CD4-positive, alpha-beta memory T cell (primary cell): ENCODE measurements at regions of chr13 and their contacts with region 1.

Region 1: DNA sequence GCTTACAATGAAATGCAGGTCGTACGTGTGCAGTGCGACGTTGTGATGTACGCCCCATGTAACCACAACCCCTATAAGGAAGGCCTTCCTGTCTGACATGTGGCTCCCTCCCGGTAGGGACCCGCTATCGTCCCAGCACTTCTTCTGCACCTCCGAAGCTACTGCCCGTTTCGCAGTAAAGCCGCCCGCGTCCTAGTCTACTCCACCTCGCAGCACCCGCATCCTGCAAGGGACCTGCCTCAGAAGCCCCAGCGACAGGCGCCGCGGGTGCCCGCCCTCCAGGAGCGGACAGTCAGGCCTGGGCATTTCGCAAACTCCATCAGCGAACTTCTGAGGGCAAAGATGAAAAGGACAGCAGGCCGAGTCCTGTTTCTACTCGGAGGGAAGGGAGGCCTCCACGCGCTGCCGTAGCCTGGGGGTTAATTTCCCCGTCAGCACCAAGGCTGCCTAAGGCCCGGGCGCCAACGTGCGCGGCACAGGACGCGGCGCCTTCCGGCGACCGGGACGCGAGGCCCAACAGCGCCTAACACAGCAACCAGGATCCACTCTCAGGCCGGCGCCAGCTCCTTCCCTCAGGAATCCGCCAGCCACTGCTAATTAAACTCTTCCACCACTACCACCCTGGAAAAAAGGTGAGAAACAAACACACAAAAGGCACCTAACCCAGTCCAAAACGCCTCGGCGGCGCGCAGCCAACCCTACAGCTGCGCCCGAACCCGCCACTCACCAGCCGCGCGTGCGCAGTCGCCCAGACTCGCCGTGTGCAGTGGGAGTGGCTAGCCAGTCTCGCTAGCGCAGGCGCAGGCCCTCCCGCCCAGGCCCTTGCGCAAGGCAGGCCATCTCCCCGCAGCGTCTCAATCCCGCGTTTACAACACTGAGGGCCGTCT is at the start of gene EEF1AKMT1:
- DNase-seq: peak; percentile 89 to 93 (median 93)
- H3K4me3 ChIP-seq: peak within 1 kb of the TSS; percentile 70 to 86
- H3K4me3 Mint-ChIP-seq: peak within 1 kb of the TSS; percentile 90 to 99 (median 94)
- H3K27ac ChIP-seq: peak within 1 kb of the TSS; percentile 85
- H3K27ac Mint-ChIP-seq: peak within 1 kb of the TSS; percentile 95 to 100 (median 99)
- H3K4me1 ChIP-seq: peaks cover 13% of the 10 kb centered on the region
- H3K4me1 Mint-ChIP-seq: peaks cover 17 to 35% (median 26%) of the 10 kb centered on the region in 4 donors
- H3K27me3 ChIP-seq: no peaks in the 10 kb centered on the region
- H3K27me3 Mint-ChIP-seq: no peaks in the 10 kb centered on the region
- total RNA-seq, gene EEF1AKMT1: 8.1 TPM

Region 2: GRCh38 chr13:19863323-19864023 is 910.0 kb before region 1 on chr13 and contains the start of gene ZMYM5:
- CTCF ChIA-PET with region 1: no interaction called
- POLR2A ChIA-PET with region 1: interaction called, 3 read pairs
- intact Hi-C with region 1: loop called (anchors 5 kb)
- DNase-seq: peak; percentile 90 to 95 (median 92)
- H3K4me3 ChIP-seq: peak within 1 kb of the TSS; percentile 61 to 96
- H3K4me3 Mint-ChIP-seq: peak within 1 kb of the TSS; percentile 96 to 99 (median 98)
- H3K27ac ChIP-seq: peak within 1 kb of the TSS; percentile 81
- H3K27ac Mint-ChIP-seq: peak within 1 kb of the TSS; percentile 90 to 98 (median 96)
- H3K4me1 ChIP-seq: peaks cover 33% of the 10 kb centered on the region
- H3K4me1 Mint-ChIP-seq: peaks cover 23 to 47% (median 35%) of the 10 kb centered on the region in 4 donors
- H3K27me3 ChIP-seq: no peaks in the 10 kb centered on the region
- H3K27me3 Mint-ChIP-seq: no peaks in the 10 kb centered on the region
- total RNA-seq, gene ZMYM5: 25.1 to 25.5 TPM

Region 3: GRCh38 chr13:20495082-20496023 is 278.1 kb before region 1 on chr13:
- CTCF ChIA-PET with region 1: no interaction called
- POLR2A ChIA-PET with region 1: no interaction called
- intact Hi-C with region 1: loop called (anchors 5 kb)
- DNase-seq: peak; percentile 62 to 70 (median 68)
- H3K4me3 ChIP-seq: no peak overlapping the region
- H3K4me3 Mint-ChIP-seq: no peak overlapping the region
- H3K27ac ChIP-seq: no peak overlapping the region
- H3K27ac Mint-ChIP-seq: peak overlapping the region in 1 of 7 donors; percentile 32
- H3K4me1 ChIP-seq: peaks cover 6% of the 10 kb centered on the region
- H3K4me1 Mint-ChIP-seq: peaks cover 0 to 7% (median 2%) of the 10 kb centered on the region in 4 donors
- H3K27me3 ChIP-seq: no peaks in the 10 kb centered on the region
- H3K27me3 Mint-ChIP-seq: no peaks in the 10 kb centered on the region

Region 4: GRCh38 chr13:20566898-20567874 is 206.3 kb before region 1 on chr13 and contains the start of gene IFT88:
- CTCF ChIA-PET with region 1: no interaction called
- POLR2A ChIA-PET with region 1: interaction called, 4 read pairs
- intact Hi-C with region 1: loop called (anchors 1 kb)
- DNase-seq: peak; percentile 78 to 86 (median 80)
- H3K4me3 ChIP-seq: peak within 1 kb of the TSS; percentile 56 to 61
- H3K4me3 Mint-ChIP-seq: peak within 1 kb of the TSS; percentile 92 to 95 (median 94)
- H3K27ac ChIP-seq: peak within 1 kb of the TSS; percentile 53
- H3K27ac Mint-ChIP-seq: peak within 1 kb of the TSS; percentile 92 to 96 (median 92)
- H3K4me1 ChIP-seq: peaks cover 16% of the 10 kb centered on the region
- H3K4me1 Mint-ChIP-seq: peaks cover 10 to 19% (median 14%) of the 10 kb centered on the region in 4 donors
- H3K27me3 ChIP-seq: no peaks in the 10 kb centered on the region
- H3K27me3 Mint-ChIP-seq: no peaks in the 10 kb centered on the region
- total RNA-seq, gene IFT88: 8.3 to 9.8 TPM

Region 5: DNA sequence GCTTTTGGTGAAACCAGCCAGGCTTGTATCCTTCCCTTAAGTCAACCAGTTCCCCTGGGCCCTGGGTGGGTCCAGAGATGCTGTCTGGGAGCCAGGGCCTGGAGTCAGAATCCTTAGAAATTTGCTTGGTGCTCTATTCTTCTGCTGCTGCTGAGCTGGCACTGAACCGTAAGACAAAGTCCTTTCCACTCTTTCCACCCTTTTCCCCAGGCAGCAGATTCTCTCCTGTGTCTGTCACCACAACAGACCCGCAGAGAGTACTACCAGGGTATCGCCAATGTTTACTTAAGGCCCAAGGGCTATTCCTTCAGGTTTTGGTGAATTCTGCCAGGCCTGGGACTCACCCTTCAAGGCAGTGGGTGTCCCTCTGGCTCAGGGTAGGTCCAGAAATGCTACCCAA is 194.2 kb before region 1 on chr13:
- CTCF ChIA-PET with region 1: no interaction called
- POLR2A ChIA-PET with region 1: no interaction called
- intact Hi-C with region 1: no loop called
- DNase-seq: no peak
- H3K4me3 ChIP-seq: no peak overlapping the region
- H3K4me3 Mint-ChIP-seq: no peak overlapping the region
- H3K27ac ChIP-seq: no peak overlapping the region
- H3K27ac Mint-ChIP-seq: no peak overlapping the region
- H3K4me1 ChIP-seq: no peaks in the 10 kb centered on the region
- H3K4me1 Mint-ChIP-seq: peaks cover 0 to 2% (median 0%) of the 10 kb centered on the region in 4 donors
- H3K27me3 ChIP-seq: no peaks in the 10 kb centered on the region
- H3K27me3 Mint-ChIP-seq: no peaks in the 10 kb centered on the region

Region 6: DNA sequence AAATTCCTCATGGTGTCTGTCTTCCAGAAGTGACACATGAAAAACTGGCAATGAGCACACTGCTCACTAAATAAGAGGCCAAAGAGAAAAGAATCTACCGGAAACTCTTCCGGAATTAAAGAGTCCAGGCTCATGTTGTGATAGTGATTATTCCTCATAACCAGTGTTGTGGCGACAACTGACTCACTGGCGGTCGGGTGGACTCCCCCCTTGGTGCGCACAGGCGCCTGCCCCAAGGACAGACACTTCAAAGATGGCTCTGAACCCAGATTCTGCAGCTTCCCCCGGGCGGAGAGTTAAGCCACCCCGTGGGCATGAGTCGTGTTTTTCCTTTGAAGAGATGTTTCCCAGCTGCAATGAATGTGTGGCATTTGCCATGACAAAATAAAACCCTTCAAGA is 59.7 kb before region 1 on chr13:
- CTCF ChIA-PET with region 1: no interaction called
- POLR2A ChIA-PET with region 1: no interaction called
- intact Hi-C with region 1: loop called (anchors 2 kb)
- DNase-seq: no peak
- H3K4me3 ChIP-seq: no peak overlapping the region
- H3K4me3 Mint-ChIP-seq: no peak overlapping the region
- H3K27ac ChIP-seq: no peak overlapping the region
- H3K27ac Mint-ChIP-seq: no peak overlapping the region
- H3K4me1 ChIP-seq: peaks cover 6% of the 10 kb centered on the region
- H3K4me1 Mint-ChIP-seq: peaks cover 4 to 10% (median 7%) of the 10 kb centered on the region in 4 donors
- H3K27me3 ChIP-seq: no peaks in the 10 kb centered on the region
- H3K27me3 Mint-ChIP-seq: peaks cover 3 to 12% of the 10 kb centered on the region in 2 donors

Region 7: DNA sequence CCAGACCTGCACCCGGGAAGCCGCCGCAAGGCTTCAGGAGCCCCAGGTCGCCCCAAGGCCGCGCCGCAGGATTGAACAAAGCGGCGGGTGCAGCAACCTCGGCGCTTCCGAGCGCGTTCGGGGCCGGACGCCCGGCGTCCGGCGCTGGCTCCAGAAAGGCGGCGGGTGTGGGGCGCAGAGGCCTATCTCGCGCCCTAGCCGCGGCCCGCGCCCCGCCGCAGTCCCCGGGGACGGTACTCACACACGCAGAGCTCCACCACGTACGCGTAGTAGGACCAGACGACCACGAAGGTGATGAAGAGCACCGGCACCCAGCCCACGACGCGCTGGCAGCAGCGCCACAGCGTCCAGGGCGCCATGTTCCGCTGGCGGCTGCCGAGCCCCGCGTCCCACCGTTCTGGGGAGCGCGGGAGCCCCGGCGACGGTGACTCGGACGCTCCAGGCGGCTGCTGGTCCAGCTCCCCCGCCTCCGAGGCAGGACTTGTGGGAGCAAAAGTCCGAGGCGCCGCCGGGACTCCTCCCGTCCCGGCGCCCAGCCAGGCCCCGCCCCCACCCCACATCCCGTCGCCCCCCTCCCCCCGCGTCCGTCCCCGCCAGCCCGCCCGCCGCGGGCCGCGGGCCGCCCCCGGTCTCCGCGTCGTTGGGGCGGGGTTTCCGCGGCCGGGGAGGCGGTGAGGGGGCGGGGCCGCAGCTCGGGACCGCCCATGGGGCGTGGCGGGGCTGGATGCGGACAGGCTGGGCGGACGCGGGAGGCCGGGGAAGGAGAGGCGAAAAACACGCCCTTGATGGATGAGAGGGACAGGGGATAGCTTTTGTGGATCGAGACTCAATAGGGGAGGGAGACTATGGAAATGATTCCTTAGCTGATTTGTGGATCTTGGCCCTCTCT is 685.6 kb after region 1 on chr13 and contains the start of gene ZDHHC20:
- CTCF ChIA-PET with region 1: no interaction called
- POLR2A ChIA-PET with region 1: no interaction called
- intact Hi-C with region 1: loop called (anchors 5 kb)
- DNase-seq: peak; percentile 82 to 93 (median 86)
- H3K4me3 ChIP-seq: peak within 1 kb of the TSS; percentile 34 to 72
- H3K4me3 Mint-ChIP-seq: peak within 1 kb of the TSS; percentile 92 to 95 (median 94)
- H3K27ac ChIP-seq: peak within 1 kb of the TSS; percentile 86
- H3K27ac Mint-ChIP-seq: peak within 1 kb of the TSS; percentile 84 to 97 (median 94)
- H3K4me1 ChIP-seq: peaks cover 39% of the 10 kb centered on the region
- H3K4me1 Mint-ChIP-seq: peaks cover 30 to 56% (median 42%) of the 10 kb centered on the region in 4 donors
- H3K27me3 ChIP-seq: no peaks in the 10 kb centered on the region
- H3K27me3 Mint-ChIP-seq: no peaks in the 10 kb centered on the region
- total RNA-seq, gene ZDHHC20: 69.5 to 72.3 TPM